ENCODE measurements at regions of chr3 and their contacts with region 1.

Region 1: DNA sequence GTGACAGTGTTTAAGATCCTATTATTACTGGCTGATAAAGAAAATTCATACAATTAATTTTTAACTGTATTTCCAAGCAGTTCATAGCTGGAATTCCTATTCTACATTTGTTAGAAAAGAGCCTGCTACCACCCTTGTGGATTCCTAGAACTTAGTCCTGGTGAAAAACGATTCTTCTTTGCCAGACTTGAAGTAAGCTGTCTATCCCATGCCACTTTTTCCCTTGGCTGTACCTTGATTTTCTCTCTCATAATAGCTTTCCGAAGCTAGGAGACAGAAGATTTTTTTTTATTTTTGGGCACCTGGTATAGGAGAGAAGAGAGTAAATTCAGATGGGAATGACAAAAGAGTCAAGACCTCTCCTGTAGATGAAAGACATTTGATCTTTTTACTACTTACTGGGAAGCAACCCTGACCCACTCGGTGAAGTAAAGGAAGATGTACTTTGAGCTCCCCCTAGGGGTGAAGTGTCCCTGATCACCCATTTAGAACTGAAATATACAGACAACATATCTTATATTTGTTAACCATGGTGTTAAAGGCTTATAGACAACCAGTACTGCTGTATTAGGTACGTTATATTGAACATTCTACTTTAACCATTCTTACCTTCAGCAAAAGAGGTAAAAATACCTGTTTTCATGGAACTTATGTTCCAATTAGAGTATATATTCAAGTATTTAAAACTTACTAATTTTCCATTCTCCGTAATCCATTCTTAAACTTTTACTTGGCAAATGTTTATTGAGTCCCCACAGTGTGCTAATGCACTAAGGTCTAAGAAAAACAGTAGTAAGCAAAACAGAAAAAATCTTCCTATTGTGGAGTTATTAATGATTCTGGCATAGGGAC is 36.2 kb upstream of the C3orf38 start:
- DNase-seq: peak; percentile 81
- H3K4me3 Mint-ChIP-seq: no peak overlapping the region
- H3K27ac Mint-ChIP-seq: peak overlapping the region; percentile 23
- H3K4me1 Mint-ChIP-seq: peaks cover 17% of the 10 kb centered on the region
- H3K27me3 Mint-ChIP-seq: no peaks in the 10 kb centered on the region
- CTCF ChIP-seq: peak; percentile 58

Region 2: DNA sequence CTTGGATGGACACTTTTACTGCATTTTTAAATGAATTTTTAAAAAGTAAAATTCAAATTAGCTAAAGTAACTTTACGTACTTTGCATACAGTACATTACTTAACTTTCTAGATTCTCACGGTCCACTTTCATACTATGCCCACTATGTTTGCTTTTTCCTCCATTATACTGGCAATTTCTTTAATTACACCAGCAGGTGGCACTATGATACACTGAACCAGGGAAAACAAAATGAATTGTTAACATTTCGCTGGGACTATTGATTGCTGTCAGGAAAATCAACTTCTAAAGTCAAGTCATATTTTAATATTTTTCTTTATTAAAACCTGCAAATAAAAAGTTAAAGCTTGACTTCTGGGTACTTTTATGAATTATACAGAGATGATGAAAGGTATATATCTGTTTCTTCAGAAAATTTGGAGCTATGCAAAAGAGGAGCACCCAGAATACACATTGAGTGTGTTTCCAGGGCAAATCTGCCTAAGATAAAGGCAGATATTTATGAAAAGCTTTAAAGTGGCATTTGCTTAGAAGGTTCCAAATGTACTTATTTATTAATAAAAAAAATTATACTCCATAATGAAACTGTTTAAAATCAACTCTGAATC is 815.3 kb before region 1 on chr3:
- CTCF ChIA-PET with region 1: interaction called, 3 read pairs
- POLR2A ChIA-PET with region 1: no interaction called
- intact Hi-C with region 1: loop called (anchors 1 kb)
- DNase-seq: peak; percentile 68
- H3K4me3 Mint-ChIP-seq: no peak overlapping the region
- H3K27ac Mint-ChIP-seq: no peak overlapping the region
- H3K4me1 Mint-ChIP-seq: no peaks in the 10 kb centered on the region
- H3K27me3 Mint-ChIP-seq: no peaks in the 10 kb centered on the region
- CTCF ChIP-seq: peak; percentile 54

Region 3: GRCh38 chr3:87969620-87970019 is 143.9 kb before region 1 on chr3:
- CTCF ChIA-PET with region 1: no interaction called
- POLR2A ChIA-PET with region 1: no interaction called
- intact Hi-C with region 1: no loop called
- DNase-seq: no peak
- H3K4me3 Mint-ChIP-seq: no peak overlapping the region
- H3K27ac Mint-ChIP-seq: no peak overlapping the region
- H3K4me1 Mint-ChIP-seq: no peaks in the 10 kb centered on the region
- H3K27me3 Mint-ChIP-seq: no peaks in the 10 kb centered on the region
- CTCF ChIP-seq: no peak

Region 4: GRCh38 chr3:88003115-88003755 is 110.3 kb before region 1 on chr3:
- CTCF ChIA-PET with region 1: interaction called, 15 read pairs
- POLR2A ChIA-PET with region 1: no interaction called
- intact Hi-C with region 1: loop called (anchors 1 kb)
- DNase-seq: peak; percentile 68
- H3K4me3 Mint-ChIP-seq: no peak overlapping the region
- H3K27ac Mint-ChIP-seq: no peak overlapping the region
- H3K4me1 Mint-ChIP-seq: no peaks in the 10 kb centered on the region
- H3K27me3 Mint-ChIP-seq: no peaks in the 10 kb centered on the region
- CTCF ChIP-seq: peak; percentile 69

Region 5: DNA sequence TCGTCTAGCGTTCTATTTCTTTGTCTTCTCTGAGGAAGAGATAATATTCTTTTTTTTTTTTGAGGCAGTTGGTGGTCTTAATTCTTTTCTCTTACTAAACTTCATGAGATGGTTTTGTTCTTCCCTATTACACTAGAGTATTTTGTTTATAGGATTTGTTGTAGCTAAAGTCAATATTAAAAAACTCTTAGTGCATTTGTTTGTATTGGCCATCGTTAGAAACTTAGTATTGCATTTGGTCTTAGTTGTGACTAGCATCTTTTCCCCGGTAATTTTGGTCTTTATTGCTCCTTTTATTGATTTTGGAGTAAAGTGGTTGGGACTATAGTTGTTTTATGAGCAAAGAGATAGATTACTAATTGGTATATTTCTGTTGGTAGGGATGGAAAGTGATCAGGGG is 19.5 kb before region 1 on chr3:
- CTCF ChIA-PET with region 1: interaction called, 11 read pairs
- POLR2A ChIA-PET with region 1: no interaction called
- intact Hi-C with region 1: no loop called
- DNase-seq: no peak
- H3K4me3 Mint-ChIP-seq: no peak overlapping the region
- H3K27ac Mint-ChIP-seq: no peak overlapping the region
- H3K4me1 Mint-ChIP-seq: no peaks in the 10 kb centered on the region
- H3K27me3 Mint-ChIP-seq: no peaks in the 10 kb centered on the region
- CTCF ChIP-seq: no peak

Region 6: GRCh38 chr3:88141458-88142083 is 28.0 kb after region 1 on chr3:
- CTCF ChIA-PET with region 1: interaction called, 11 read pairs
- POLR2A ChIA-PET with region 1: no interaction called
- intact Hi-C with region 1: no loop called
- DNase-seq: peak; percentile 31
- H3K4me3 Mint-ChIP-seq: no peak overlapping the region
- H3K27ac Mint-ChIP-seq: peak overlapping the region; percentile 39
- H3K4me1 Mint-ChIP-seq: peaks cover 12% of the 10 kb centered on the region
- H3K27me3 Mint-ChIP-seq: no peaks in the 10 kb centered on the region
- CTCF ChIP-seq: no peak